Dorsolateral prefrontal cortex (tissue), 120 donors: ENCODE measurements at regions of chr10 and their contacts with region 1.

Region 1: GRCh38 chr10:95246579-95247051 is 44.2 kb downstream of the PDLIM1 start:
- DNase-seq: peak in 3 of 10 donors; percentile 17 to 58 (median 22)
- H3K4me3 ChIP-seq: no peak overlapping the region
- H3K27ac ChIP-seq: no peak overlapping the region
- H3K27me3 ChIP-seq: peaks cover 0 to 33% (median 0%) of the 10 kb centered on the region in 45 donors
- CTCF ChIP-seq: peak; percentile 47 to 88 (median 76)

Region 2: DNA sequence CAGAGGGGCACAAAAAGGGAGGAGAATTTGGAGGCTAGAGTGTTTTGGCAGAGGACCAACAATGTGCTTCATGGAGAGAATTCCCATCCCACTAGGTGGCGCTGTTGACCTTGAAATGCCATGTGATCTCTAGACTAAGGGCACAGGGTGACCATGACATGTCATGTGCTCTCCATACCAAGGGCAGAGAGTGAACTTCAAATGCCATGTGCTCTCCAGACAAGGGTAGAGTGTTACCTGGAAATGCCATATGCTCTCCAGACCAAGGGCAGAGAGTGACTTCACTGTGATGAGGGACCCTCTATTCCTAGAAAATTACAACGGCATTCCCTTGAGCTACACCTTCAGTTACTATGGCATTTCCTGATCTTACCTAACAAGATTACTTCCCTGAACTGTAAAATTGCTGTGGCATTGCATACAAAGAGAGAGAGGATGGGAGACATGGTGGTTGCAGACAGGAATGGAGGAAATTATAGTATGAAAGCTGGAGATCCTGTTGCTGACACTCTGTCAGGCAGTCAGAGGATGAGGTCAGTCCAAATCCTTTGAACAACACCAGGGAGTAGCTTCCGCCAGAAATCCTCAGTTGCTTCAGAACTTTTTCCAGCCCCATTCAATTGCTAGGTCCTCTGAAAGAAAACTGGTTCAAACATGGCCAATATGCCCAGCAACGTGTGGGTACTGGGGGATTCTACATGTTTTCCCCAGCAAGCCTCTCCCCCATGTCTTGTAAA is 113.4 kb before region 1 on chr10:
- intact Hi-C with region 1: loop called in 1 of 2 experiments (anchors 2 kb)
- DNase-seq: peak in 6 of 10 donors; percentile 4 to 70 (median 30)
- H3K4me3 ChIP-seq: no peak overlapping the region
- H3K27ac ChIP-seq: no peak overlapping the region
- H3K27me3 ChIP-seq: peaks cover 0 to 4% (median 0%) of the 10 kb centered on the region in 45 donors
- CTCF ChIP-seq: peak; percentile 19 to 75 (median 62)

Region 3: DNA sequence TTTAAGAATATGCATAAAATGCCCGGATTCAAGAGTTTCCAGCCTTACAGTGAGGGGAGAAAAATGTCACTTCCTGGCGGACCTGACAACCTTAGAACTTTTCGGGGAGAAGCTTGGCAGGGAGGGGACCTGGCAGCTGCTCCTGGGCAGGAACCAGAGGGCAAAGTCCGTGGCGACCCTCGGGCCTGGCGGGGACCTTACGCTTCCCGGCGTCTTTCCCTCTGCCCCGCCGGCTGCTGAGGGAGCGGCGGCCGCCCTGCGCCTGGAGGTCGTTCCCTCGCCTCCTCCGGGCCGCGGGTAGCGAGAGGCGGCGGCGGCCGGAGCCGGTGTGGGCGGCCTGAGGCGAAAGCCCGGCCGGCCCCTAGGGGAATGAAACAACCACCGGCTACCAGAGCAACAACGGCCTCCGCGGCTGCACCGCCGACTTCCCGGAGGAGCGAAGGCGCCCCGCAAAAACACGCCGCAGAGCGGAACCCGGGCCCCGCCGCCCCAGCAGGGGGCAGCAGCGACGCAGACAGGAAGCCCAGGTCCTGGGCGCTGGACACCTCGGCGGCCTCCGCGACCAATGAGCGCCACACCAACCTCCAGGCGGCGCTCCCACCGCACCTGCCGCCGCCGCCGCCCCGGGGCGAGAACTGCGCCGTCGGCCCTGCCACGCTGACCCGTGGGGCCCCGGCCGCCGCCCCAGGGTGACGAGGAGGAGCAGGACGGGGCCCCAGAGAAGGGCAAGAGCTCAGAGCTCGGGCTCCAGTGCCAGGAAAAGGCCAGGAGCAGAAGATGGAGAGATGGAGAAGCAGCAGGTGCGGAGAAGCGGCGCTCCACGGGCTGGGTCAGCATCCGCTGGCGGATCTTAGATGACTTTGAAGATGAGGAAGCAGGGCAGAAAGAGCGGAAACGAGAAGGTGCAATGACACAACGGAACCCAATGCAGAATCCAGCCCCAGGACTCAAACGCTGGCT is 63.1 kb before region 1 on chr10:
- intact Hi-C with region 1: loop called in 1 of 2 experiments (anchors 2 kb)
- DNase-seq: peak; percentile 52 to 82 (median 62)
- H3K4me3 ChIP-seq: peak overlapping the region; percentile 29 to 78 (median 63)
- H3K27ac ChIP-seq: peak overlapping the region in 28 of 59 donors; percentile 10 to 84 (median 48)
- H3K27me3 ChIP-seq: peaks cover 0 to 33% (median 0%) of the 10 kb centered on the region in 45 donors
- CTCF ChIP-seq: peak; percentile 50 to 95 (median 82)

Region 4: DNA sequence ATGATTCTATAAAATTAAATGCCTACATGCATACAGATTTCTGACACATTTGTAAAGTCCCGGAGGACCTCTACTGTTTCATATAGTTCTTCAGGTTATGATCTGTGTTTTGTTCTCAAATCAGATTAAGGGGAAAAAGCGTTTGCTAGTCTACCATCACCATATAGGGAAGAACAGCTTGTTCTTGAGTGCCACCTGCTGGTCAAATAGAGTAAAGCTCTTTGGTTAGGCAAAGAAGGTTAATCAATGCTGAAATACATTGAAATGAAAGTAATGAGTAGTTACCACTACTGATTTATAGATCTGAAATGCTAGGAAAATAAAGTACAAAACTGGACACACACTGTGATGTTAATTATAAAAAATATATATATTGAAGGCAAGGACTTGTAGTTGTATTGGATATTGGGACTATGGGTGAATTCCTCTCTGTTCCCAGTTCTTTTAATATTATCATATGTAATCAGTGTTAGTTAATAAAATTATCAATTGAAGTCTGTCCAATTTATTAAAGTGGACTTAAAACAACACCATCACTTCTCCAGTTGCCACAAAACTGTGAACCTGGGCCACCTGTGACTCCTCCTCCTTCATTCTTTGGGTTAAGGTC is 116.8 kb after region 1 on chr10:
- intact Hi-C with region 1: loop called (anchors 2 to 5 kb)
- DNase-seq: peak in 2 of 10 donors; percentile 43 to 50
- H3K4me3 ChIP-seq: no peak overlapping the region
- H3K27ac ChIP-seq: peak overlapping the region in 9 of 59 donors; percentile 17 to 64 (median 31)
- H3K27me3 ChIP-seq: no peaks in the 10 kb centered on the region
- CTCF ChIP-seq: peak; percentile 78 to 98 (median 92)

Region 5: GRCh38 chr10:95601116-95601719 is 354.6 kb after region 1 on chr10:
- intact Hi-C with region 1: loop called in 1 of 2 experiments (anchors 5 kb)
- DNase-seq: peak; percentile 47 to 86 (median 74)
- H3K4me3 ChIP-seq: no peak overlapping the region
- H3K27ac ChIP-seq: peak overlapping the region in 1 of 59 donors; percentile 5
- H3K27me3 ChIP-seq: peaks cover 0 to 8% (median 0%) of the 10 kb centered on the region in 45 donors
- CTCF ChIP-seq: peak; percentile 82 to 99 (median 95)